Tibial artery (tissue), 4 donors: ENCODE measurements at regions of chr19 and their contacts with region 1.

Region 1: GRCh38 chr19:38975214-38975860 is at the start of gene FBXO17:
- DNase-seq: peak; percentile 52 to 81
- H3K4me3 ChIP-seq: peak within 1 kb of the TSS; percentile 61 to 70
- H3K27ac ChIP-seq: peak within 1 kb of the TSS; percentile 93 to 95
- H3K4me1 ChIP-seq: peaks cover 0 to 24% (median 14%) of the 10 kb centered on the region in 4 donors
- H3K27me3 ChIP-seq: no peaks in the 10 kb centered on the region
- CTCF ChIP-seq: peak in 1 of 2 experiments; percentile 6

Region 2: DNA sequence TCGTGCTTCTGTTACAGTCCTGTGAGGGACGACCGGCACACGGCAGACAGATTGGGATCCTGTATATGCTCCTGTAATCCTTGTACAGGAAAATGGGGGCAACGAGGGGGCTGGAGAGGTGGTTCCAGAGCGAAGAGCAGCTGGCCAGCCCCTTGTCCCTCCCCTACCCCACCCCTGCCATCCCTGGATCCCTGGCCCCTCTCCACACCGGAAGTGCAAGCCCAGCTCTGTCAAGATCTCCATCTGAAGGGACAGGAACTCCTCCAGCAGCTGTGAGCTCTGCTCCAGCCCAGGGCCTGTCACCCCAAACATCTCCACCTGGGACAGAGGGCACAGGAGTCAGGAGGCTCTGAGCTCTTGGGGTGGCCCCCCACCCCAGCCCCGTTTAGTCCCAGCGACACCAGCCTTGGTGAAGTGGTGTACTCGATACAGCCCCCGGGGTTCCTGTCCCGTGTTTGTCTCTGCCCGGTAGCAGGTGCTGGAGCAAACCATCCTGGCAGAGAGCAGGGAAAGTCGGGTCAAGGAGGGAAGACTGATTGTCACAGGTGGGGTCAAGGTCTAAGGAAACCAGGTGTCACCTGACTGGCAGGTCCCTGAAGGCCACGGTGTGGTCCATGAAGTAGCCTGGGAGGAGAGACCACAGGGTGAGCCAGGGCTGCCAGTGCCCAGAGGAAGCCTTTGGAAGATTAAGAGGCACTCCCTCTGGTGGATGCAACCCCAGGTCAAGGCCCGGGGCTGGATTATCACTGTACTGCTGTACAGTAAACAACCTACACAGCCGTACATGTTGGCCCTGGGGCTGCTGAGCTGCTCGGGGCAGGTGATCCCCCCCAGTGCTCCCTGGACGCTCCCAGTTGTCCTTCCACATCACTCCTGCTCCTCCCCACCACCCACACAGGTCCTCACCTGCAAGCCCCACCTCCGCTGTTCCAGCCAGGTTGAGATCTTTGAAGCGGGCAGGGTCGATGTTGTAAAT is 57.5 kb before region 1 on chr19:
- intact Hi-C with region 1: no loop called
- DNase-seq: peak in 1 of 2 donors; percentile 49
- H3K4me3 ChIP-seq: no peak overlapping the region
- H3K27ac ChIP-seq: no peak overlapping the region
- H3K4me1 ChIP-seq: no peaks in the 10 kb centered on the region
- H3K27me3 ChIP-seq: no peaks in the 10 kb centered on the region
- CTCF ChIP-seq: no peak

Region 3: GRCh38 chr19:39038098-39038497 is 62.8 kb after region 1 on chr19:
- intact Hi-C with region 1: loop called (anchors 2 kb)
- DNase-seq: no peak
- H3K4me3 ChIP-seq: no peak overlapping the region
- H3K27ac ChIP-seq: no peak overlapping the region
- H3K4me1 ChIP-seq: peaks cover 0 to 6% (median 2%) of the 10 kb centered on the region in 4 donors
- H3K27me3 ChIP-seq: peaks cover 0 to 14% of the 10 kb centered on the region in 2 donors
- CTCF ChIP-seq: no peak

Region 4: GRCh38 chr19:39328046-39328705 is 352.8 kb after region 1 on chr19:
- intact Hi-C with region 1: loop called (anchors 10 kb)
- DNase-seq: peak; percentile 83 to 84
- H3K4me3 ChIP-seq: no peak overlapping the region
- H3K27ac ChIP-seq: no peak overlapping the region
- H3K4me1 ChIP-seq: no peaks in the 10 kb centered on the region
- H3K27me3 ChIP-seq: peaks cover 0 to 25% of the 10 kb centered on the region in 2 donors
- CTCF ChIP-seq: peak; percentile 90 to 95